CD4-positive, alpha-beta T cell (primary cell): ENCODE measurements at regions of chr5 and their contacts with region 1.

Region 1: DNA sequence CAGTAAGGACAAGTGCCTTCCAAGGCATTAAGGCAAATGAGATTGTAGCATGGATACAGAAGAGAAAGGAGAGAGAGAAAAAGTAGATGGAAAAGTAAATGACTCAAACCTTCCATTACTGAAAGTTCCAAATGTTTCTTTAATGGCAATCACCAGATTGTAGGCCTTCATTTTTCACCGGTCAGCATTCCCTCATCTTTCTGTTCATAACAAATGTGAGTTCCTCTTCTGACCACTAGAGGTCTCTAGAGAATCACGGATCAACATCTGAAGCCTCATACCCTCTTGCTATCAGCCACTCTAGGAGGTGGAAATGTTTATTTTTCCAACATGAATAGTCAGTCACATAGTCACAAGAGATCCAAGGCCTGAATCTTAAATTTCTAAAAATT is 73.6 kb upstream of the RPS23 start:
- DNase-seq: peak in 4 of 14 experiments; percentile 16 to 77 (median 66)
- ATAC-seq: peak; percentile 60
- H3K4me3 ChIP-seq: no peak overlapping the region
- H3K4me3 Mint-ChIP-seq: no peak overlapping the region
- H3K27ac ChIP-seq: no peak overlapping the region
- H3K27ac Mint-ChIP-seq: no peak overlapping the region
- H3K4me1 ChIP-seq: peaks cover 3% of the 10 kb centered on the region
- H3K4me1 Mint-ChIP-seq: peaks cover 3% of the 10 kb centered on the region
- H3K27me3 ChIP-seq: no peaks in the 10 kb centered on the region
- H3K27me3 Mint-ChIP-seq: no peaks in the 10 kb centered on the region
- CTCF ChIP-seq: peak; percentile 93

Region 2: GRCh38 chr5:82466986-82467561 is 115.3 kb after region 1 on chr5:
- CTCF ChIA-PET with region 1: no interaction called
- POLR2A ChIA-PET with region 1: no interaction called
- intact Hi-C with region 1: loop called in 1 of 2 experiments (anchors 10 kb)
- DNase-seq: no peak
- ATAC-seq: no peak
- H3K4me3 ChIP-seq: no peak overlapping the region
- H3K4me3 Mint-ChIP-seq: no peak overlapping the region
- H3K27ac ChIP-seq: no peak overlapping the region
- H3K27ac Mint-ChIP-seq: no peak overlapping the region
- H3K4me1 ChIP-seq: no peaks in the 10 kb centered on the region
- H3K4me1 Mint-ChIP-seq: no peaks in the 10 kb centered on the region
- H3K27me3 ChIP-seq: no peaks in the 10 kb centered on the region
- H3K27me3 Mint-ChIP-seq: no peaks in the 10 kb centered on the region
- CTCF ChIP-seq: no peak

Region 3: GRCh38 chr5:82641331-82642003 is 289.7 kb after region 1 on chr5:
- CTCF ChIA-PET with region 1: interaction called, 3 read pairs
- POLR2A ChIA-PET with region 1: no interaction called
- intact Hi-C with region 1: loop called (anchors 1 to 5 kb)
- DNase-seq: peak in 3 of 14 experiments; percentile 39 to 54 (median 53)
- ATAC-seq: no peak
- H3K4me3 ChIP-seq: no peak overlapping the region
- H3K4me3 Mint-ChIP-seq: no peak overlapping the region
- H3K27ac ChIP-seq: no peak overlapping the region
- H3K27ac Mint-ChIP-seq: no peak overlapping the region
- H3K4me1 ChIP-seq: no peaks in the 10 kb centered on the region
- H3K4me1 Mint-ChIP-seq: no peaks in the 10 kb centered on the region
- H3K27me3 ChIP-seq: no peaks in the 10 kb centered on the region
- H3K27me3 Mint-ChIP-seq: no peaks in the 10 kb centered on the region
- CTCF ChIP-seq: peak; percentile 48

Region 4: DNA sequence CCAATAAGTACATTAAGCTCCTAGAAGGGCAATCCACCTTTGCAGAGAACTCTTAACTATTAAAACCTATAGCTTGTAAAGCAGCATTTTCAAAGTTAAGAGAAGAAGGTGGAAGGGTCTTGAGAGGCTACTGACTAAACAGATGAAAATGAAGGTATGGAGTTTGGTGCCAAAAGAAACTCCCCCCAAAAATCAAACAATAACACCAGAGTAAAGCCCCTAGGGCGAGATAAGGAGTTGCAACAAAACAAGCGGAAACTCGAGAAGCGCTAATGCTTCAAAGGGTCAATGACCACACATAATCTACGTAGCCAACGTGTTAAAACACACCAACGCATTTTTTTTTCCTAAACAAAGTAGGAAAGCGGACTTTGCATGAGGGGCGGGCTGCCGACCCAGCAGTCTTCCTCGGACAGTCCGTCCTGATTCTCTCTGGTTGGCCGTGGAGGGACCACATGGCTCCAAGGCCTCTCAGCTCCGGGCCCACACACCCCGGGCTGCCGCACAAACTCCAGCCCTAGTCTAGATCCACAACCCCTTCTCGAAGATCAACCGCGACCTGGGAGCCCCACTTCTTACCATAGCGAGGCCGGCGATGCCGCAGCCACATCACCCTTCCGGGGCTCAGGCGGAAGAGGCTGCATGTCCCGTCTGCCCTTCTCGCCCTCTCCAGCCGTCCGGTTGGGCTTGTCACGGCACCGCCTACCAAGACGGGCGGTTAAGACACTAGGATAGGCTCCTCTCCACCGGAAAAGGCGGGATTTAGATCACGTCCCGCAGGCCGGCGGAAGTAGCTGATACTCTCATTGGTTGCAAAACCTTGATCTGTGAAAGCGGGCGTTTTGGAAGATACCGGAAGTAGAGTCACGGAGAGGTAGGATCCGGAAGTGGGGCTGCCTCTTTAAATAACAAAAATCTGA is 725.3 kb after region 1 on chr5 and contains the starts of genes TMEM167A and XRCC4:
- CTCF ChIA-PET with region 1: no interaction called
- POLR2A ChIA-PET with region 1: interaction called, 8 read pairs
- intact Hi-C with region 1: loop called (anchors 5 kb)
- DNase-seq: peak; percentile 81 to 98 (median 89)
- ATAC-seq: peak; percentile 98
- H3K4me3 ChIP-seq: peak within 1 kb of the TSS; percentile 76
- H3K4me3 Mint-ChIP-seq: peak within 1 kb of the TSS; percentile 94
- H3K27ac ChIP-seq: peak within 1 kb of the TSS; percentile 83 to 88
- H3K27ac Mint-ChIP-seq: peak within 1 kb of the TSS; percentile 95
- H3K4me1 ChIP-seq: peaks cover 18% of the 10 kb centered on the region
- H3K4me1 Mint-ChIP-seq: peaks cover 61% of the 10 kb centered on the region
- H3K27me3 ChIP-seq: no peaks in the 10 kb centered on the region
- H3K27me3 Mint-ChIP-seq: no peaks in the 10 kb centered on the region
- CTCF ChIP-seq: no peak
- total RNA-seq, gene TMEM167A: 33.8 to 37.1 TPM
- total RNA-seq, gene XRCC4: 1.8 TPM

Region 5: GRCh38 chr5:83473346-83474163 is 1121.8 kb after region 1 on chr5:
- CTCF ChIA-PET with region 1: no interaction called
- POLR2A ChIA-PET with region 1: no interaction called
- intact Hi-C with region 1: loop called in 1 of 2 experiments (anchors 5 kb)
- DNase-seq: peak in 6 of 14 experiments; percentile 14 to 58 (median 40)
- ATAC-seq: peak; percentile 46
- H3K4me3 ChIP-seq: peak overlapping the region; percentile 45
- H3K4me3 Mint-ChIP-seq: peak overlapping the region; percentile 84
- H3K27ac ChIP-seq: no peak overlapping the region
- H3K27ac Mint-ChIP-seq: no peak overlapping the region
- H3K4me1 ChIP-seq: peaks cover 33% of the 10 kb centered on the region
- H3K4me1 Mint-ChIP-seq: peaks cover 41% of the 10 kb centered on the region
- H3K27me3 ChIP-seq: peaks cover 56 to 83% of the 10 kb centered on the region in 2 experiments
- H3K27me3 Mint-ChIP-seq: peaks cover 94% of the 10 kb centered on the region
- CTCF ChIP-seq: peak; percentile 43

Region 6: GRCh38 chr5:83718195-83718825 is 1366.6 kb after region 1 on chr5:
- CTCF ChIA-PET with region 1: no interaction called
- POLR2A ChIA-PET with region 1: no interaction called
- intact Hi-C with region 1: loop called in 1 of 2 experiments (anchors 10 kb)
- DNase-seq: peak in 4 of 14 experiments; percentile 4 to 49 (median 38)
- ATAC-seq: peak; percentile 59
- H3K4me3 ChIP-seq: no peak overlapping the region
- H3K4me3 Mint-ChIP-seq: no peak overlapping the region
- H3K27ac ChIP-seq: no peak overlapping the region
- H3K27ac Mint-ChIP-seq: no peak overlapping the region
- H3K4me1 ChIP-seq: peaks cover 9% of the 10 kb centered on the region
- H3K4me1 Mint-ChIP-seq: peaks cover 13% of the 10 kb centered on the region
- H3K27me3 ChIP-seq: peaks cover 12 to 41% of the 10 kb centered on the region in 2 experiments
- H3K27me3 Mint-ChIP-seq: peaks cover 61% of the 10 kb centered on the region
- CTCF ChIP-seq: peak; percentile 54